CD14-positive monocyte (primary cell): ENCODE measurements at regions of chr12 and their contacts with region 1.

Region 1: DNA sequence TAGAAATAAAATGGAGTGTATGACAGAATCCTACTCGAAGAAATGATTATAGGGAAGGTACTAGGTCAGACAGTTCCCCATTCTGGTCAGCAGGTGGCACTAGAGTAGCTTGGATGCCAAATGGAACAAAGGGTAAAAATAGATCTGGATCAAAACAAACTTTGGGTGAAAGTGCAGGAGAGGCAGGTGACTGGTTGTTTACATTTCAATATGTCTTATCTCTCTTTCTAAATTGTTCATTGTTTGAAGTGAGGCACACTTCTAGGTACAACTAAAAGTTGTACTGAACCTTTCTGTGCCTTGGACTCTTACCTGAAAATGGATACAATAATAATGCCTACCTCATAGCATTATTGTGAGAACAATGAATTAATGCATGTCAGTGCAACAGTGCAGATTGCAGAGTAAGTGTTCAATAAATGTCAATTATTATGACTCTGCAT is 62.0 kb upstream of the OSBPL8 start:
- DNase-seq: peak; percentile 54 to 67 (median 63)
- H3K4me3 ChIP-seq: no peak overlapping the region
- H3K4me3 Mint-ChIP-seq: no peak overlapping the region
- H3K27ac ChIP-seq: no peak overlapping the region
- H3K27ac Mint-ChIP-seq: no peak overlapping the region
- H3K4me1 ChIP-seq: no peaks in the 10 kb centered on the region
- H3K4me1 Mint-ChIP-seq: peaks cover 2% of the 10 kb centered on the region
- H3K27me3 ChIP-seq: no peaks in the 10 kb centered on the region
- H3K27me3 Mint-ChIP-seq: peaks cover 0 to 1% (median 0%) of the 10 kb centered on the region in 3 donors
- CTCF ChIP-seq: peak; percentile 92

Region 2: DNA sequence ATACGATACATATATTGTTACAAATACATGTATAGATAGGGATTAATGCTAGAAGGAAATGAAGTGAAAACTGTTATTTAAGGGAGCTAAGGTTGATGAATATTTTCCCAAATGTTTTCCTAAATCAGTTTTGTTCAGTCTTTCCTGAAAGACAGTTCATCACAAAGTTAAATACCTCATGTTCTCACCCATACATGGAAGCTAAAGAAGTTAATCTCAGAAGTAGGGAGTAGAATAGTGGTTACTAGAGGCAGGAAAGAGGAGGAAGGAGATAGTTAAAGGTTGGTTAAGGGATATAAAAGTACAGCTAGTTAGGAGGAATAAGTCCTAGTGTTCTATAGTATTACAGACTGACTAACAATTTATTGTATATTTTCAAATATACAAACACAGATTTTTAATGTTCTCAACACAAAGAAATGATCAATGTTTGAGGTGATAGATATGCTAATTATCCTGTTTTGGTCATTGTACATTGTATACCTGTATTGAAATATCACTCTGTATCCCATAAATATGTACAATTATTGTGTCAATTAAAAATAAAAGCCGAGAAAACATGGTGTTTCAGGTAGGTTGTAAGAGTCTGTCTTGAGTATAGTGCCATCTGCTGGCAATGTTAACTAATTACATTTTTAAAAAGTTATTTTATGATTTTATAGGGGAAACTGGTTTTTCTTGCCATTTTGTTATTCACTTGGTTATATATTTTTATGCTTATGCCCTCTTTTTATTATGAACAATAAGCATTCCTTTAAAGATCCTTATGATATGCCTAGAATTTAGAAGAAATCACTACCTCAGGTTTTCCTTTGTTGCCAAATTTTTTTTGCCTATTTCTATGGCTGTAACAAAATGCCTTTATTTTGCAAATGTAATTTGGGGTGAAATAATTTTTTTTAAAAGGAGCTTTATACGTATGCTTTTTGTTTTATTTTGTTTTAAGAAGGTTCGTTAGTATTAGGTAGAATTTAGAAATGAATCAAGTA is 169.3 kb after region 1 on chr12:
- intact Hi-C with region 1: loop called (anchors 2 to 5 kb)
- DNase-seq: peak; percentile 10 to 48 (median 15)
- H3K4me3 ChIP-seq: no peak overlapping the region
- H3K4me3 Mint-ChIP-seq: no peak overlapping the region
- H3K27ac ChIP-seq: no peak overlapping the region
- H3K27ac Mint-ChIP-seq: no peak overlapping the region
- H3K4me1 ChIP-seq: no peaks in the 10 kb centered on the region
- H3K4me1 Mint-ChIP-seq: peaks cover 1% of the 10 kb centered on the region
- H3K27me3 ChIP-seq: no peaks in the 10 kb centered on the region
- H3K27me3 Mint-ChIP-seq: no peaks in the 10 kb centered on the region
- CTCF ChIP-seq: peak; percentile 84